ENCODE measurements at regions of chr6 and their contacts with region 1.

Region 1: DNA sequence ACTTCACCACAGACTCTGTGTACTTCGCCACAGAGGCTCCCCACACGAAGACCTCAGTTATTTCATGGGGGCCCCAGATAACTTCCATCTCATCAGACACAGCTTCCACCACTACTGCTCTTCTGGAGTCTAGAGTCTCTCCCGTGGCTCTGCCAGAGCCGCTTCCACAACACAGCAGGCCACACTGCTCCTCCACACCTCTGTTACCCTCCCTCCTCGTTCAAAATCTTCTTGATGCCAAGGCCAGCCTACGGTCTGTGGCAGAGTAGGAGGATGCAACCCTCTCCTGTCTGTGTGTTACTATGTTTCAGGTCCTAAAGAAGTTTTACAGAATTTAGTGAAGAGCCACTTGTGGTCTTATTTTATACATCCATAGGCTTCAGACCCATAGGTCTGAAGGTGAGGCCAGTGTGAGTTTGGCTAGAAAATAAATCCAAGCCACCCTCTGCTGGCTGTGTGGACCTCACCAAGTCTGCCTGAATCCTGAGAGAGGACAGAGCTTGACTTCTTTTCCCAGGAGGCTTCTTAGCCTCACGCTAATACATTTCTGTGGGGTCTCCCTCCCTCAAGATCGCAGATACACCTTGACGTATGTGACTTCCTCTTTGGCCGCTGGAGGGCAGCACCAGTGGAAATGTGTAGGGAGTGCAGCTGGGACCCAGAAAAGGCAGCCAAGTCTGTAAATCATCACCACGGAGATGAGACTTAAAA is 197.7 kb downstream of the FAXC start:
- H3K4me3 ChIP-seq: no peak overlapping the region
- H3K27ac ChIP-seq: no peak overlapping the region
- H3K4me1 ChIP-seq: no peaks in the 10 kb centered on the region
- CTCF ChIP-seq: peak; percentile 56

Region 2: GRCh38 chr6:99130897-99131873 is 20.6 kb before region 1 on chr6:
- CTCF ChIA-PET with region 1: interaction called, 23 read pairs
- POLR2A ChIA-PET with region 1: no interaction called
- H3K4me3 ChIP-seq: no peak overlapping the region
- H3K27ac ChIP-seq: no peak overlapping the region
- H3K4me1 ChIP-seq: no peaks in the 10 kb centered on the region
- CTCF ChIP-seq: no peak

Region 3: DNA sequence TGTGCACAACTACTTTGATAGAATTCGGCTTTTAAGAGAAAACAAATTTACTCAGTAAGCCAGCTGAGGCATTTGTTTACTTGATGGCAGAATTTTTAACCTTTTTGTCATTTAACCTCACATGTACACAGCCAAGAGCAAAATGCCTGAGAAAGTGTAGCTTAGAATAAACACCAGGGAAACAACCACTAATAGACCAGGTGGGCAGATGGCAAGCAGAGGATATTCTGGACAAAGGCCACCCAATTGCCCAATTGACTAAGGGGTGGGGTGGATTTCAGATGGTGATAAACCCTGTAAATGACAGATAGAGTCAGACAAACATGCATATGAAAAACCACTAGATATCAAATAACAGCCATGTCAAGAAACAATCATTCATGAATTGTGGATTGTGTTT is 13.3 kb before region 1 on chr6:
- CTCF ChIA-PET with region 1: interaction called, 28 read pairs
- POLR2A ChIA-PET with region 1: no interaction called
- H3K4me3 ChIP-seq: no peak overlapping the region
- H3K27ac ChIP-seq: no peak overlapping the region
- H3K4me1 ChIP-seq: no peaks in the 10 kb centered on the region
- CTCF ChIP-seq: no peak

Region 4: DNA sequence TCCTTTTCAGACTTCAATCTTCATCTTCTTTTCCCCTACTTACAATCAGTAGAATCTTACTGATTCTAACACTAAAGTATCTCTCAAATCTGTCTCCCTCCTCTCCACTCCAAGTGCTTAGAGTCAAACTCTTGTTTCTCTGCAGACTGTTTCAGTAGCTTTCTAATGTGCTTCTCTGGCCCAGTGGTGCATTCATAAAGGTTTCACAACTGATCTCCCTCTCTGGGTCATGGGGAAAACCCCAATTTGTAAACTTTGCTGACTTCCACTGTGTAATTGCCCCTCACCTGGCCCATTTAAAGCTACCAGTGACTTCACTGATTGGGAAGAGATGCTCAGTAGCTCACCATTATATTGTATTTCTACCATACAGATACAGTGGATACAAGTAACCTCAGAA is 14.0 kb after region 1 on chr6:
- CTCF ChIA-PET with region 1: interaction called, 42 read pairs
- POLR2A ChIA-PET with region 1: no interaction called
- H3K4me3 ChIP-seq: no peak overlapping the region
- H3K27ac ChIP-seq: no peak overlapping the region
- H3K4me1 ChIP-seq: no peaks in the 10 kb centered on the region
- CTCF ChIP-seq: no peak

Region 5: DNA sequence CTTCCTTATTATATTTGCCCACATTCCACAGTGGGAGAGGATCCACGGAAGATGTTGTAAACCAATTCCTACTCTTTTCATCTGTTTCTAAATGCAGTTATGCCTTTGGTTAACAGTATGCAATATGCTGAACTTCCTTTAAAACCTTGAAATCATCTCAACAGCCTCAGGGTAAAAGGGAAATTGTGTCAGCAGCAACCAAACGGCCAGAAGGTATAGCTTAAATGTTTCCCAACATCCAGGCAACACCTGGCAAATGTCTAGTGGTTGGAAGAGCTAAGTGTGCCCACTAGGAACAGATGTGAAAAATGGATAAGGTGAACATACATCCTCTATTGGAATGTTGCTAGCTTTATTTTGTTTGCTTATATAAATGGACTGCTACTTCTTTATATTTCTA is 32.9 kb after region 1 on chr6:
- CTCF ChIA-PET with region 1: interaction called, 12 read pairs
- POLR2A ChIA-PET with region 1: no interaction called
- H3K4me3 ChIP-seq: no peak overlapping the region
- H3K27ac ChIP-seq: no peak overlapping the region
- H3K4me1 ChIP-seq: no peaks in the 10 kb centered on the region
- CTCF ChIP-seq: no peak

Region 6: GRCh38 chr6:99216959-99217358 is 65.2 kb after region 1 on chr6:
- CTCF ChIA-PET with region 1: interaction called, 10 read pairs
- POLR2A ChIA-PET with region 1: no interaction called
- H3K4me3 ChIP-seq: no peak overlapping the region
- H3K27ac ChIP-seq: no peak overlapping the region
- H3K4me1 ChIP-seq: no peaks in the 10 kb centered on the region
- CTCF ChIP-seq: no peak

Region 7: DNA sequence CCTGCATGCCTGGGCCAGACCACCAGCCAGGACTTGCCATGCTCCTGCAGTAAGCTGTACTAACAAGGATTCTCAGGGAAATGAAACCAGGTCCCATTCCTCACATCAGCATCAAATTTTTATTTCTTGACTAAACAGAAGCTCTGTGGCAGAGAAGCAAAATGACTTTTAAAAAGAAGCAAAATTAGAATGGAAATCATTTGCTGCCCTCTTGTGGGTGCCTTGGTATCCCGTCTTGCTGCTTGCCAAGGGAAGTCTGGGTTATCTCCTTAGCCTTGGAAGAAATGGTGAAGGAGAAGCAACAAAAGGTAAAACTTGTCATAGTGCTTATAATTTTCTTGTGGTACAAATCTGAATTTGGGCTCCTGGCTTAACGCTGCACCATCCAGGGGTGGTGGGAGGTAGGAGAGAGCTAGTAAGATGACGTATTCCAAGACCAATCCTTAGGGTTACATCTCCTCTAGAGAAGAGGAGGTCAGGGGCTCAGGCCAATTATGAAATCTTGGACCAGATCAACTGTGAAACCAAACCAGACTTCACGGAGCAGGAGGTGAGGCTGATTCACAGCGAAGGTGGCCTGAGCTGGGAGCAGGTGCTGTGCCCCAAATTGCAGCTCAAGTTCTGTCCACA is 90.2 kb after region 1 on chr6:
- CTCF ChIA-PET with region 1: interaction called, 124 read pairs
- POLR2A ChIA-PET with region 1: no interaction called
- H3K4me3 ChIP-seq: no peak overlapping the region
- H3K27ac ChIP-seq: no peak overlapping the region
- H3K4me1 ChIP-seq: no peaks in the 10 kb centered on the region
- CTCF ChIP-seq: no peak; the same call in 1 of the 2 replicates

Measured in HEK293 (cell line).